Upper lobe of right lung (tissue), 1 donor: ENCODE measurements at regions of chr9 and their contacts with region 1.

Region 1: DNA sequence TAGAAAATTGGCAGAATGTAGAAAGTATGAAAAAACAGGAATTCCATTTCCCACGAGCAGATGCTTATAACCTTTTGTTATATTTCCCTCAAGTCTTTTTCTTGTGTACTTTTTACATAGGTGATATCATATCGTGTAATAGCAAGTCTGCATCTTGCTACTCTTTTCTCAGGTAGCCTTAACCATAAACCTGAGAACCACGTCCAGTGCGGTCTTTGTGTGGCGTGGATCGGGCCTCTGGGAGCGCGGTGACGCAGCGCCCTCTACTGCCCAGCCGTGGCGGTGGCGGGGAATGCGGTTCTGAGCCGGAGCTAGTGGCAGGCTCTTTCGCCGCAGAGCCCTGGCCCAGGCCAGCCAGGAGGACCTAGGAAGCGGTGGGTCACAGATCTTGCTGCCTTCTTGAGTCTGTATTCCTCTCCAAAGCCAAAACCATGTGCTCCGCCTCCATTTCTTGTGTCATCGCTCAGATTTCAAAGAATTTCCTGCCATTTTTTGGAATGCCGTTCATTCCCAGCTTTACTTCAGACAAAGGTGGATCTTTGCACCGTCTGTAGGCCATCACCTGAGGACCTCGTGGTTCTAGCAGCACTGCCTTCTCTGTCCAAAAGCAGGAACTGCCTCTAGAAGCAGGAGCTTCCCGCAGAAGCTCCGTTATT is 71.9 kb downstream of the MVB12B start:
- DNase-seq: peak; percentile 89
- ATAC-seq: peak; percentile 91
- H3K4me3 ChIP-seq: no peak overlapping the region
- H3K27ac ChIP-seq: no peak overlapping the region
- H3K4me1 ChIP-seq: peaks cover 24% of the 10 kb centered on the region
- H3K27me3 ChIP-seq: no peaks in the 10 kb centered on the region
- CTCF ChIP-seq: peak; percentile 99

Region 2: GRCh38 chr9:126144603-126145456 is 253.7 kb before region 1 on chr9:
- intact Hi-C with region 1: no loop called
- DNase-seq: peak; percentile 2
- ATAC-seq: no peak
- H3K4me3 ChIP-seq: no peak overlapping the region
- H3K27ac ChIP-seq: no peak overlapping the region
- H3K4me1 ChIP-seq: no peaks in the 10 kb centered on the region
- H3K27me3 ChIP-seq: peaks cover 23% of the 10 kb centered on the region
- CTCF ChIP-seq: no peak

Region 3: DNA sequence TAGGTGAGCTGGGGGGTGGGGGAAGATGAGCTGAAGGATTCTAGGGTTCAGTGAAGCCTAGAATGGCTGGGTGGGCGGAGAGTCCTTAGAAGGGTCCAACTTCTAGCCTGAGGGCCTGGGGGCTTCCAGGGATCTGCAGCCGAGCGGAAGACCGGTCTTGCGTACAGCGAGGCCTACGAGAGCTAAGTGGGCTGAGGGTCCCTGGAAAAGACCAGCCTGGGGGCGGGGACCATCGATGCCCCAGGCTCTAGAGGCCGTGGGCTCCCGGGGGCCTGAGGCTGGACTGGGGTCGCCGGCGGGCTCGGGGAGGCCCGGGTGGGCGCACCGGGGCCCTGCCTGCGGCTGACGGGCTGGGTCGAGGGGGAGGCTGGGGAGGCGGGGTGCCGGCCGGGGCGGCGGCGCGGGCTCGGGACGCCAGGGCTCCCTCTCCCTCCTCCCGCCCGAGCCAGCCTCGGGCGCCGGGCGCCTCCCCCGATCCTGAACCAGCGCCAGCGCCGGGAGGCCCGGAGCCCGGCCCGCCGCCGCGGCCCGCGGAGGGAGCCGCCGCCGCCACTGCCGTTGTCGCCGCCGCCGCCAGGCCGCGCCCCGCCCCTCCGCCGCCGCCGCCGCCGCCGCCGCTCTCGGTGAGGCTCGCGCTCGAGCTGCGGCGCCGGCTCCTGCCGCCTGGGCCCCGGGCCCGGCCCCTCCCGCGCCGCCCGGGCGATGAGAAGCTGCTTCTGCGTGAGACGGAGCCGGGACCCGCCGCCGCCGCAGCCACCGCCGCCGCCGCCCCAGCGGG is 72.1 kb before region 1 on chr9 and contains the start of gene MVB12B:
- intact Hi-C with region 1: loop called (anchors 10 kb)
- DNase-seq: peak; percentile 78
- ATAC-seq: peak; percentile 82
- H3K4me3 ChIP-seq: peak within 1 kb of the TSS; percentile 60
- H3K27ac ChIP-seq: peak within 1 kb of the TSS; percentile 81
- H3K4me1 ChIP-seq: peaks cover 6% of the 10 kb centered on the region
- H3K27me3 ChIP-seq: no peaks in the 10 kb centered on the region
- CTCF ChIP-seq: no peak
- total RNA-seq, gene MVB12B: 47.5 TPM